Activated CD8-positive, alpha-beta T cell treated with anti-CD3 and anti-CD28 coated beads for 36 hours (primary cell): ENCODE measurements at regions of chr17 and their contacts with region 1.

Region 1: GRCh38 chr17:3602499-3602898 is 6.7 kb downstream of the TRPV1 start:
- DNase-seq: peak; percentile 40
- ATAC-seq: no peak
- H3K4me3 Mint-ChIP-seq: no peak overlapping the region
- H3K27ac Mint-ChIP-seq: no peak overlapping the region
- H3K4me1 Mint-ChIP-seq: no peaks in the 10 kb centered on the region
- H3K27me3 Mint-ChIP-seq: no peaks in the 10 kb centered on the region
- CTCF ChIP-seq: peak; percentile 64

Region 2: GRCh38 chr17:3613139-3613538 is 10.6 kb after region 1 on chr17:
- CTCF ChIA-PET with region 1: interaction called, 10 read pairs
- POLR2A ChIA-PET with region 1: no interaction called
- intact Hi-C with region 1: no loop called
- DNase-seq: no peak
- ATAC-seq: no peak
- H3K4me3 Mint-ChIP-seq: no peak overlapping the region
- H3K27ac Mint-ChIP-seq: no peak overlapping the region
- H3K4me1 Mint-ChIP-seq: no peaks in the 10 kb centered on the region
- H3K27me3 Mint-ChIP-seq: no peaks in the 10 kb centered on the region
- CTCF ChIP-seq: no peak

Region 3: DNA sequence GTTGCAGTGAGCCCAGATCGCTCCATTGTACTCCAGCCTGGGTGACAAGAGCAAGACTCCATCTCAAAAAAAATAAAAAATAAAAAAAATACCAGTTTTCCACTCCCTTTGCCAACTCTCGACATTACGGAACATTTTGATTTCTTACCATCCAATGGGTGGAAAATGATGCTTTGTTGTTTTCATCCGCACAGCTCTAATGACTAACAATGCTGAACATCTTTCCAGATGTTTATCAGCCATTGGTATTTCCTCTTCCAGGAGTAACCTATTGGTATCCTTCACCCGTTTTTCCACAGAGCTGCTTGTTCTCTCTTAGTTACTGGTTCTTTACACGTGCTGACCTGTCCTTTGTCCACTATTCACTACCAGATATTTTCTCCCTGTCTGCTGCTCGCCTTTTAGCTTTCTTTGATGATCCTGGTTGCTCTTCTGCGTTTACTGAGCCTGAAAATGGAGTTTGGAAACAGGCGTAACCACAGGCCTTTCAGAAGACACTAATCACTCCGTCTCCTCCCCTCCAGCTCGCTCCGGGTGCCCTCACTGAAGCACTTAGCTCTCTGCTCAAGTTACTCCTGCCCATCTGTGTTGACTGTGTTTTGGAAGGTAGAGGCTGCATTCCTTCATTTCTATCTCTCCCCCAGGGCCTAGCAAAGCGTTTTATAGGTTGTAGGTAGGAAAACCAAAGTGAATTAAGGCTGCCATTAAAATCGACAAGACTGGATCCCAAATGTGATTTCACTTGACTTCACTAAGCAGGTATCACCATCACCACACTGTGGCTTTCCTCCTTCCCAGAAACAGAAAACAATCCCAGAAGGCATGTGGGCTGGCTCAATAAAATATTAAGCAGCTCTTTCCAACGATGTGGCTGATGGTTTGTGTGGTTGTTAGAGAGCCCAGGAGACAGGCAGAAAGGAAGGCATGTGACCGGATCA is 24.6 kb after region 1 on chr17:
- CTCF ChIA-PET with region 1: interaction called, 14 read pairs
- POLR2A ChIA-PET with region 1: no interaction called
- intact Hi-C with region 1: no loop called
- DNase-seq: no peak
- ATAC-seq: no peak
- H3K4me3 Mint-ChIP-seq: no peak overlapping the region
- H3K27ac Mint-ChIP-seq: no peak overlapping the region
- H3K4me1 Mint-ChIP-seq: no peaks in the 10 kb centered on the region
- H3K27me3 Mint-ChIP-seq: no peaks in the 10 kb centered on the region
- CTCF ChIP-seq: no peak